Naive thymus-derived CD4-positive, alpha-beta T cell (primary cell): ENCODE measurements at regions of chrX and their contacts with region 1.

Region 1: GRCh38 chrX:39730662-39731397 is 366.9 kb downstream of the BCOR start:
- DNase-seq: peak; percentile 15 to 59 (median 47)
- ATAC-seq: peak; percentile 80
- H3K4me3 ChIP-seq: no peak overlapping the region
- H3K4me3 Mint-ChIP-seq: peak overlapping the region in 8 of 10 donors; percentile 30 to 76 (median 50)
- H3K27ac ChIP-seq: no peak overlapping the region
- H3K27ac Mint-ChIP-seq: peak overlapping the region in 6 of 9 donors; percentile 53 to 90 (median 76)
- H3K4me1 ChIP-seq: no peaks in the 10 kb centered on the region
- H3K4me1 Mint-ChIP-seq: peaks cover 0 to 15% (median 4%) of the 10 kb centered on the region in 7 donors
- H3K27me3 ChIP-seq: no peaks in the 10 kb centered on the region
- H3K27me3 Mint-ChIP-seq: no peaks in the 10 kb centered on the region

Region 2: GRCh38 chrX:39766085-39766726 is 35.4 kb after region 1 on chrX:
- CTCF ChIA-PET with region 1: no interaction called
- POLR2A ChIA-PET with region 1: no interaction called
- intact Hi-C with region 1: loop called (anchors 5 kb)
- DNase-seq: peak in 8 of 9 donors; percentile 32 to 70 (median 54)
- ATAC-seq: peak; percentile 92
- H3K4me3 ChIP-seq: peak overlapping the region; percentile 37
- H3K4me3 Mint-ChIP-seq: peak overlapping the region; percentile 6 to 78 (median 52)
- H3K27ac ChIP-seq: peak overlapping the region; percentile 71
- H3K27ac Mint-ChIP-seq: peak overlapping the region; percentile 87 to 97 (median 95)
- H3K4me1 ChIP-seq: peaks cover 16 to 17% of the 10 kb centered on the region in 2 donors
- H3K4me1 Mint-ChIP-seq: peaks cover 1 to 29% (median 24%) of the 10 kb centered on the region in 7 donors
- H3K27me3 ChIP-seq: no peaks in the 10 kb centered on the region
- H3K27me3 Mint-ChIP-seq: no peaks in the 10 kb centered on the region

Region 3: GRCh38 chrX:39886282-39886681 is 155.5 kb after region 1 on chrX:
- CTCF ChIA-PET with region 1: no interaction called
- POLR2A ChIA-PET with region 1: no interaction called
- intact Hi-C with region 1: no loop called
- DNase-seq: no peak
- ATAC-seq: no peak
- H3K4me3 ChIP-seq: no peak overlapping the region
- H3K4me3 Mint-ChIP-seq: peak overlapping the region in 1 of 10 donors; percentile 7
- H3K27ac ChIP-seq: no peak overlapping the region
- H3K27ac Mint-ChIP-seq: no peak overlapping the region
- H3K4me1 ChIP-seq: peaks cover 0 to 1% of the 10 kb centered on the region in 2 donors
- H3K4me1 Mint-ChIP-seq: peaks cover 3 to 30% (median 6%) of the 10 kb centered on the region in 7 donors
- H3K27me3 ChIP-seq: no peaks in the 10 kb centered on the region
- H3K27me3 Mint-ChIP-seq: peaks cover 0 to 10% (median 0%) of the 10 kb centered on the region in 5 donors

Region 4: GRCh38 chrX:40068044-40068443 is 337.2 kb after region 1 on chrX:
- CTCF ChIA-PET with region 1: no interaction called
- POLR2A ChIA-PET with region 1: no interaction called
- intact Hi-C with region 1: loop called in 1 of 2 experiments (anchors 2 kb)
- DNase-seq: peak in 2 of 9 donors; percentile 35 to 39
- ATAC-seq: peak; percentile 75
- H3K4me3 ChIP-seq: no peak overlapping the region
- H3K4me3 Mint-ChIP-seq: peak overlapping the region in 2 of 10 donors; percentile 11 to 12
- H3K27ac ChIP-seq: no peak overlapping the region
- H3K27ac Mint-ChIP-seq: peak overlapping the region in 8 of 9 donors; percentile 19 to 81 (median 40)
- H3K4me1 ChIP-seq: peaks cover 0 to 33% of the 10 kb centered on the region in 2 donors
- H3K4me1 Mint-ChIP-seq: peaks cover 22 to 71% (median 65%) of the 10 kb centered on the region in 7 donors
- H3K27me3 ChIP-seq: no peaks in the 10 kb centered on the region
- H3K27me3 Mint-ChIP-seq: no peaks in the 10 kb centered on the region

Region 5: GRCh38 chrX:40169193-40170101 is 438.6 kb after region 1 on chrX:
- CTCF ChIA-PET with region 1: no interaction called
- POLR2A ChIA-PET with region 1: no interaction called
- intact Hi-C with region 1: loop called (anchors 2 to 5 kb)
- DNase-seq: peak in 8 of 9 donors; percentile 65 to 81 (median 74)
- ATAC-seq: peak; percentile 79
- H3K4me3 ChIP-seq: peak overlapping the region; percentile 51
- H3K4me3 Mint-ChIP-seq: peak overlapping the region; percentile 86 to 94 (median 90)
- H3K27ac ChIP-seq: peak overlapping the region; percentile 98
- H3K27ac Mint-ChIP-seq: peak overlapping the region; percentile 96 to 99 (median 98)
- H3K4me1 ChIP-seq: peaks cover 14 to 31% of the 10 kb centered on the region in 2 donors
- H3K4me1 Mint-ChIP-seq: peaks cover 17 to 64% (median 40%) of the 10 kb centered on the region in 7 donors
- H3K27me3 ChIP-seq: no peaks in the 10 kb centered on the region
- H3K27me3 Mint-ChIP-seq: no peaks in the 10 kb centered on the region

Region 6: GRCh38 chrX:40266490-40267333 is 535.9 kb after region 1 on chrX:
- CTCF ChIA-PET with region 1: interaction called, 3 read pairs
- POLR2A ChIA-PET with region 1: no interaction called
- intact Hi-C with region 1: loop called (anchors 1 to 10 kb)
- DNase-seq: peak; percentile 10 to 48 (median 35)
- ATAC-seq: peak; percentile 84
- H3K4me3 ChIP-seq: peak overlapping the region; percentile 61
- H3K4me3 Mint-ChIP-seq: peak overlapping the region; percentile 66 to 87 (median 80)
- H3K27ac ChIP-seq: peak overlapping the region; percentile 8
- H3K27ac Mint-ChIP-seq: peak overlapping the region in 1 of 9 donors; percentile 47
- H3K4me1 ChIP-seq: no peaks in the 10 kb centered on the region
- H3K4me1 Mint-ChIP-seq: peaks cover 0 to 13% (median 6%) of the 10 kb centered on the region in 7 donors
- H3K27me3 ChIP-seq: no peaks in the 10 kb centered on the region
- H3K27me3 Mint-ChIP-seq: no peaks in the 10 kb centered on the region